Heart right ventricle (tissue), 16 donors: ENCODE measurements at regions of chr10 and their contacts with region 1.

Region 1: GRCh38 chr10:128429835-128430513 is 303.8 kb upstream of the MKI67 start:
- DNase-seq: no peak
- ATAC-seq: no peak
- H3K4me3 ChIP-seq: no peak overlapping the region
- H3K27ac ChIP-seq: no peak overlapping the region
- H3K4me1 ChIP-seq: no peaks in the 10 kb centered on the region
- H3K27me3 ChIP-seq: peaks cover 0 to 49% (median 34%) of the 10 kb centered on the region in 7 donors
- CTCF ChIP-seq: no peak

Region 2: DNA sequence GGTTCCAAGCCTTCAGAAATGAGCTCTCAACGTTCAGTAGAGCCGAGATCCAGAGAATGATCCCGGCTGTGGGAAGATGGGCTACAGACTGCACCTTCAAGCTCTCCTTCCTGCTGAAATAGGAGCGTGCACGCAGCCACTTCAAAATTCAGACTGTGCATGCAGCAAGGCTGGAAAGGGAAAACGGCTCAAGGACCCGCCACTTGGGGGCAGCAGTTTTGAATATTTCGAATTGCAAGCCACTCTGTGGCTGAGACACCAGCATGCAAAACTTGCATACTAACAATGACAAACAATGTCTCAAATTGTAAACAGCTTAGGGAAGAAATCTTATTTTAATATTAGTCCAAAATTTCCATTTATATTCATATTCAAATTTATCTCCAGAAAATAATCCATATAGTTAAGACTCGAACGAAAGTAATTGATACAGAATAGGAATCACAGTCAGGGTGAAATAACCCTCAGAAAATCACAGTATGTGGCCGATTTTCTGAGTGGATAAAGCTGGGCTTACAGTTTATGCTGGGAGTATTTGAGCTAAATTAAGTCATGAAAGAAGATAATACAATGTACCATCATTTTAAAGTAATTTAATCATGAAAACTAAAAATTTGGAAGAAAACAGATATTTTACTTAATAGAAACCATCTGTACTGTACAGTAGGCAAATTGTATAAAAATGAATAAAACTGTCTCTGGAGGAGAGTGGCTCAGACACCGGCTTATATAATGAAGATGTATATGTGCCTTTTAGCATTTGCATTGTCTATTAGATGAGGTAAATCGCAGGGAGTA is 165.9 kb before region 1 on chr10:
- intact Hi-C with region 1: loop called in 1 of 10 experiments (anchors 10 kb)
- DNase-seq: peak; percentile 61 to 66
- ATAC-seq: peak in 3 of 8 donors; percentile 43 to 56 (median 54)
- H3K4me3 ChIP-seq: no peak overlapping the region
- H3K27ac ChIP-seq: no peak overlapping the region
- H3K4me1 ChIP-seq: no peaks in the 10 kb centered on the region
- H3K27me3 ChIP-seq: peaks cover 0 to 84% (median 68%) of the 10 kb centered on the region in 7 donors
- CTCF ChIP-seq: peak; percentile 25 to 74 (median 64)

Region 3: DNA sequence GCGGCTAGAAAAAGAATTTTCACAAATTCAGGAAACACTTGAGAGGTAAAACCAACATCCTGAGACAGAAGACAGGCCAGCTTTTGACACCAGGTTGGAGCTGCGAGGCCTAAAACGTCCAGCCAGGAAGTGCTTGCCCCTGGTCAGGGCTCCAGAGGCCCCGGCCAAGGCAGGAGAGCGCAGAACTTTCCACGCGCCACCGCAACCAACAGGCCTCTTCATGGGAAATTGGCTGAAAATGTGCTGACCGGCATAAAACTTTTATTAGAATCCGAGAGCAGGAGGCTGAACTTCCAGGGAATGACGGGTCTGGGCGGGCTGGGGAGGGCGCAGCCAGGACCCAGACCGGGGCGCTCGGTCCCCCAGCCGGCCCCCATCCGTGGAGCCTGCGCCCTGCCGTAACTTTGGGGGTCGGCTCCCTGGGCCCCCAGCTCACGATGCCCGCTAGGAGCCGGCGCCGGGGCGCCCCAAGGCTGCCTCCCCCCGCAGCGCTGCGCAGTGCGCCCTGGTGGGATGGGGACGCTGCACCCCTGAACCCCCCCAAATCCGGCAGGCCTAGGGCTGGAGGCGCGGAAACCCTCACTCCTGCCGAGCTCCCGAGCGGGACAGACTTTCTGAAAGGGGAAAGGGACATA is 110.3 kb after region 1 on chr10:
- intact Hi-C with region 1: no loop called
- DNase-seq: peak; percentile 41 to 57
- ATAC-seq: peak; percentile 39 to 85 (median 63)
- H3K4me3 ChIP-seq: peak overlapping the region in 9 of 10 donors; percentile 14 to 49 (median 27)
- H3K27ac ChIP-seq: peak overlapping the region in 7 of 10 donors; percentile 10 to 80 (median 66)
- H3K4me1 ChIP-seq: peaks cover 0 to 24% (median 7%) of the 10 kb centered on the region in 9 donors
- H3K27me3 ChIP-seq: peaks cover 0 to 73% (median 58%) of the 10 kb centered on the region in 7 donors
- CTCF ChIP-seq: no peak

Region 4: GRCh38 chr10:128660726-128661125 is 230.8 kb after region 1 on chr10:
- intact Hi-C with region 1: no loop called
- DNase-seq: no peak
- ATAC-seq: no peak
- H3K4me3 ChIP-seq: no peak overlapping the region
- H3K27ac ChIP-seq: no peak overlapping the region
- H3K4me1 ChIP-seq: no peaks in the 10 kb centered on the region
- H3K27me3 ChIP-seq: peaks cover 0 to 12% (median 0%) of the 10 kb centered on the region in 7 donors
- CTCF ChIP-seq: no peak

Region 5: GRCh38 chr10:128804411-128804810 is 374.4 kb after region 1 on chr10:
- intact Hi-C with region 1: no loop called
- DNase-seq: no peak
- ATAC-seq: no peak
- H3K4me3 ChIP-seq: no peak overlapping the region
- H3K27ac ChIP-seq: no peak overlapping the region
- H3K4me1 ChIP-seq: peaks cover 0 to 4% (median 0%) of the 10 kb centered on the region in 9 donors
- H3K27me3 ChIP-seq: peaks cover 0 to 10% (median 0%) of the 10 kb centered on the region in 7 donors
- CTCF ChIP-seq: no peak